ENCODE measurements at regions of chr5 and their contacts with region 1.

Region 1: GRCh38 chr5:91383027-91383955 is at the start of gene ARRDC3:
- DNase-seq: peak; percentile 96
- ATAC-seq: peak; percentile 73 to 83
- total RNA-seq, gene ARRDC3: 18.9 to 23.7 TPM

Region 2: GRCh38 chr5:91101600-91102379 is 281.5 kb before region 1 on chr5:
- intact Hi-C with region 1: loop called (anchors 2 to 10 kb)
- DNase-seq: peak; percentile 72
- ATAC-seq: peak; percentile 96 to 98

Region 3: DNA sequence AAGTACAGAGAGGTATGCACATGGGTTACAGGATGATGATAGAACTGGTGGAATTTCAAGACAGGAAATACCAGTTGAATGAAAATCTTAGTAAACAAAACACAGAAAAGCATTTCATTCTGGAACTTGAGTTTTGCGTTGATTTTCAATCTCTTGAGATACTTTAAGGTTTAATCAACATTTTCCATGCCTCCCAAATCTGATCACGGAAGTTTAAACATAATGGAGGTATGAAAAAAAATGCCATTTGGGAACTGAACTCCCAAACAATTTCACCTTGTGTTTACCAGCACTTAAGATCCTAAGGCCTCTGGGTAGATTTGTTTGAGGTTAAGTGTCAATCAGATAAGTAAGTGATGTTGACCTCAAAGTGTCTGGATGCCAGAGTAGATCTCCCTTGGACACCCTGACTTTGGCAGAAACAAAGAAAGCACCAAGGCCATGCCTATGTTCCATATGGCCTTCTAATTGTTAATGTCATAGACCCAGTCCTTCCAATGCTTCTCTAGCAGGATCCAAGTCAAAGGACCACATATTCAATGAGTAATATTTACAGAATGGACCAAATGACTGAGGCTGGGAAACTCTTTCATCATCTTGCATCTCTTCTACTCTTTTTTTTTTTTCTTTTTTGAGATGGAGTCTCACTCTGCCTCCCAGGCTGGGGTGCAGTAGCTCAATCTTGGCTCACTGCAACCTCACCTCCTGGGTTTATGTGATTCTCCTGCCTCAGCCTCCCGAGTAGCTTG is 217.1 kb before region 1 on chr5:
- intact Hi-C with region 1: no loop called
- DNase-seq: no peak
- ATAC-seq: no peak

Region 4: DNA sequence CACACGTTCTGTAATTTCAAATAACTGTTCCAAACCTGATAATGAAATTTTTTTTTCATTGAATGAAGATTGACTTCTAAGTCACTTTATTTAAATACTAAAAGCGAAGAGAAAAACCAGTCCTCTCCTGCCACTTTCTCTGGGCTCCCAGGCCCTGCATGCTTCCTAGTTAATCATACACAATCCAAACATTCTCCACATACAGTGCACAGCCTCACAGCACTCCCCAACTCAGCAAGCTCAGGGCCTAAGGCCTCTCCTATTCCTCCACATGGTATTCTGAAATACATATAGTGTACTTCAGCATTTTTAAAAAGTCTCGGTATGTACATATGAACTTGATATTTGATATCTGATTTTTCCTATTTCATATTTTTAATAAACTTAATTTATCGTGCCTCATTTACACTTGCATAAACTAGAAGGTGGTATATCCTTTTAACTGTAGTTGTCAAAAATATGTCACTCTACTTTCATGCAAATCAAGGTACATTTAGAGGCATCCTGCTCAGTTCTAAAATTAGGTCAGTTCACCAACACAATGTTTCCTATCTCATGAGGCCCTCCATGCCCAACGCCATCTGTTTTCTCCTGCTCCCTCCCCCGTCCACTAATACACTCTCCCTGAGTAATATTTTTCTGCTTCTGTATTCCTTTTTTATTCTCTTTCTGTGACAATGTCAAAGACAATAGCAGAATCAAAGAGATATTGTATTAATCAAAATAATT is 206.8 kb before region 1 on chr5:
- intact Hi-C with region 1: no loop called
- DNase-seq: no peak
- ATAC-seq: peak; percentile 48 to 53

Region 5: GRCh38 chr5:91225848-91226686 is 157.2 kb before region 1 on chr5:
- intact Hi-C with region 1: loop called in 1 of 2 experiments (anchors 5 kb)
- DNase-seq: no peak
- ATAC-seq: peak in 1 of 2 donors; percentile 38

Region 6: GRCh38 chr5:91280362-91281269 is 102.7 kb before region 1 on chr5:
- intact Hi-C with region 1: loop called in 1 of 2 experiments (anchors 2 kb)
- DNase-seq: peak; percentile 95
- ATAC-seq: peak; percentile 98

Region 7: DNA sequence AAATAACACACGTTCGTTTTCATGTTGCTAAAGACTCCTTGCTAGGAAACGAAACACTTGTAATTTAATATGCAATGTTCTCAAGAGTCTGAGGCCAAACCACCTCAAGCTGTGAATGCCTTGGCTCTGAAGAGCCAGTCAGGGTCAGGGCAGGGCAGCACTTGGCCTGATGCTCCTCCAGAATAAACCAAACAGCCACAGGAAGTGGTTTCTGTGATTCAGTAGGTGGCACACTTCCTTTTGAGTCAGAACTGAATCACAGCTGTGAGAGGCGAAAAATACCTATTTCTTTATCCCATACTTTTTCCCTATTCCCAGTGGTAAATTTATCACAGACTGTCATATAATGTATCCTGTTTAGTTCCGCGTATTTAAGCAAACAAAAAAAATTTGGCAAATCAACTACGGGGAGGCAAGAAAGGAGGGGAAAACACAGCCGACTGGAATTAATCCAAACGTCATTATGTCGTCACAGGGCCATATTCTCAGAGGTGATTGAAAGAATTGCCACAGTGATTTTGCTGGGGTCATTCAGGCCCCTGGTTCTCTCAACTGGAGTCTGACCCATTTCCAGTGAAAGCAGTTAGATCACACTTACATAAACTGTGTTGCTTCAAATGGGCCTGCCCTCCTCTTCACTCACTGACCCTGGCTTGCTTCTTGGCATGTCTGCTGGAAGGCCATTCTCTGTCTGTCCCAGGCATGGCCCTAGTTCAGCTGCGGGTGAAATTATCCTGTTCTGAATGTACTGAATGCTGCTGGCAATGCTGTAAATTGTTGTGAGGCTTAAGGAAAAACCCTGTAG is 71.4 kb before region 1 on chr5:
- intact Hi-C with region 1: loop called (anchors 5 kb)
- DNase-seq: peak; percentile 71
- ATAC-seq: peak; percentile 76 to 82

Region 8: DNA sequence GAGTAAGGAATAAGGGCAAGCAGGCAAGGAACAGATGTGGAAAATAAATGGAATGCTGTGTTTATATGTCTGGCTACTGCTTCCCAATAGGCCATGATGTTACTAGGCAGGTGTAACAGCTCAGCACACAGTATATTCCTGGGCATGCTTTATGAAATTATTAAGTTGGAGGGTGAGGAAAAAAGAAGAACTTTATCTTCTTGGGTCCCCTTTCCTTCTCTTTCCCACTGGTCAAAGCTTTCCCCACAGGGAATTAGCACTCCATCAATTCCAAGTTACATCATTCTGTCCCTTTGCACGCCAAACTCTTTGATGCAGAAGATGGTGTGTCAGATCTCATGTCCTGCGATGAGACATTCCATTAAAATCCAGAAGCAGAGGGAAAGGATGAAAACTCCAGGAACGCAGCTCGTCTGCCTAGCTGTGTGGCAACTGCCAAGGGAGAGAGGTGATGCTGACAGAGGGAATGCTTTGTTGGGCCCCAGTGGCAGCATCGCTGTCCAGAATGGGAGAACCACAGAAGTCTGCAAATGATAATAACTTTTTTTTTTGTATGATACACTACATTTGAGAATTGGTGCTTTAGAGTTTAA is 447.2 kb after region 1 on chr5:
- intact Hi-C with region 1: no loop called
- DNase-seq: no peak
- ATAC-seq: no peak

Measured in left cardiac atrium (tissue), 4 donors.